ENCODE measurements at regions of chr6 and their contacts with region 1.

Region 1: GRCh38 chr6:11144393-11144851 is 32.9 kb upstream of the ERVFRD-1 start:
- DNase-seq: peak; percentile 71 to 85
- ATAC-seq: peak; percentile 77 to 96 (median 90)
- H3K4me3 ChIP-seq: no peak overlapping the region
- H3K27ac ChIP-seq: no peak overlapping the region
- H3K4me1 ChIP-seq: no peaks in the 10 kb centered on the region
- H3K27me3 ChIP-seq: no peaks in the 10 kb centered on the region
- CTCF ChIP-seq: peak; percentile 87

Region 2: GRCh38 chr6:11575408-11576033 is 431.1 kb after region 1 on chr6:
- intact Hi-C with region 1: loop called (anchors 2 to 10 kb)
- DNase-seq: no peak
- ATAC-seq: peak; percentile 86 to 96 (median 94)
- H3K4me3 ChIP-seq: no peak overlapping the region
- H3K27ac ChIP-seq: no peak overlapping the region
- H3K4me1 ChIP-seq: no peaks in the 10 kb centered on the region
- H3K27me3 ChIP-seq: no peaks in the 10 kb centered on the region
- CTCF ChIP-seq: peak; percentile 84

Measured in psoas muscle (tissue), 8 donors.